Heart left ventricle (tissue), 16 donors: ENCODE measurements at regions of chr21 and their contacts with region 1.

Region 1: DNA sequence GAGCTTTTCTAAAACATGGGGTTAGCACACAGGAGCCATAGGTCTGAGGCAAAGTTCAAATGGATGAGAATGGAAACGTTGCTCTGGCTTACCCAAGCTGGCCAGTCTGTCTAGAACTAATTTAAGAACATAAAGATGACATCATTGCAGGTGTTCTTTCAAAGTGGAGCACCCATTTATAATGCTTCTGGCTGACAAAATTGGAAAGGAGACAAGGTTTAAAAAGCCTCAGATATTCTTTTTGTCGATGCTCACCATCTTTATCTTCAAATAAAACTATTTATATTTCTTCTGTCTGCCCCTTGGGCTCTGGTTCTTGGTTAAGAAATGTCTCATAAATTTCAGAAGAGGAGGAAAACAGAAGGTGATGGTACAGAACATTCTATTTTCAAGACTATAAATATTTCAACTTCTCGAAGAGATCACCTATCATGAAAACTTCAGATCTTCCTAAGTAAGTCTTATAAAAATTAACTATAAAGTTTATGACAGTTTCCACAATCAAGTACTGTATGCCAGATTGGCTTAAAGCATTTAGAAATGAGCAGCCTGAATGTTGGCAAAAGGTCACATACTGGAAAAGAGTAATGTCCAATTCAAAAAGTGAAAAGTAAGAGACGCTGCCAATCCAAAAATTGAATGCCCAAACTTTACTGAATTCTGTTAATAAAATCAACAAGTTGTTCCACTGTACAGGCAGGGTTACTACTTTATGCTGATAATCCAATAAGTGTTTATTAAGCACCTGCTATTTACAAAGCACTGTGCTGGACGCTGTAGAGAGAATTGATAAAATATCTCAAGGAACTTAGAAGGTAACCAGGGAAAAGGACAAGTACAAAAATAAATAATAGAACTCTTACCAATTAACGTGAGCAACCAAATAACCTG is 92.0 kb downstream of the ETS2 start:
- DNase-seq: no peak
- ATAC-seq: peak; percentile 73 to 92 (median 85)
- H3K4me3 ChIP-seq: no peak overlapping the region
- H3K27ac ChIP-seq: peak overlapping the region in 3 of 12 donors; percentile 7 to 50 (median 41)
- H3K4me1 ChIP-seq: peaks cover 0 to 10% (median 0%) of the 10 kb centered on the region in 12 donors
- H3K27me3 ChIP-seq: no peaks in the 10 kb centered on the region
- CTCF ChIP-seq: no peak
- POLR2A ChIP-seq: no peak

Region 2: DNA sequence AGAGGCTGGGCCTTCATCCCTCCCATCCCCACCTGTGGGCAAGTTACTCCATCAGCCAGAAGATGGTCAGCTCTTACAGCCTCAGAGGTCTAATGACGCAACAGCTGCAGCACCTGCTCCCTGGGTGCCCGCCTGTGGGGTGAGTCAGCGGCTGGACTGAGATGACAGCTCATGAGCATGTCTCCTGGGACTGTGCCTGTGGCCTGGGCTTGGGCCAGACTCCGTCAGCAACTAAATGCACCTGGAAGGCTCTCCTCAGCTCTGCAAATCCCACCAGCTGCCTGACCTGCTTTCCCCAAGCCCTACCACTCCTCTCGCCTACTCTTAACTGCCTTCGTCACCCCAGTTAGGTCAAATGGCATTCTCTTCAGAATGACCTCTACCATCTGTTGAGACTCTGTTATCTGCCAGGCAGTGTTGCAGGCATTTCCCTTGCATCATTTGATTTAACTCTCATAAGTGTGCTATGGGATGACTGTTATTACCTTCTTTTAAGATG is 44.3 kb before region 1 on chr21:
- intact Hi-C with region 1: loop called in 1 of 10 experiments (anchors 5 kb)
- DNase-seq: peak in 2 of 5 donors; percentile 38 to 62
- ATAC-seq: peak; percentile 27 to 69 (median 66)
- H3K4me3 ChIP-seq: no peak overlapping the region
- H3K27ac ChIP-seq: no peak overlapping the region
- H3K4me1 ChIP-seq: peaks cover 0 to 26% (median 15%) of the 10 kb centered on the region in 12 donors
- H3K27me3 ChIP-seq: no peaks in the 10 kb centered on the region
- CTCF ChIP-seq: no peak
- POLR2A ChIP-seq: no peak

Region 3: GRCh38 chr21:39079617-39080016 is 181.8 kb after region 1 on chr21:
- intact Hi-C with region 1: no loop called
- DNase-seq: peak; percentile 65 to 86 (median 81)
- ATAC-seq: peak; percentile 40 to 81 (median 76)
- H3K4me3 ChIP-seq: no peak overlapping the region
- H3K27ac ChIP-seq: peak overlapping the region in 1 of 12 donors; percentile 77
- H3K4me1 ChIP-seq: peaks cover 0 to 49% (median 0%) of the 10 kb centered on the region in 12 donors
- H3K27me3 ChIP-seq: no peaks in the 10 kb centered on the region
- CTCF ChIP-seq: no peak
- POLR2A ChIP-seq: no peak